ENCODE measurements at regions of chr1 and their contacts with region 1.

Region 1: GRCh38 chr1:205658943-205659581 is 21.2 kb downstream of the SLC45A3 start:
- DNase-seq: no peak
- H3K4me3 ChIP-seq: no peak overlapping the region
- CTCF ChIP-seq: peak; percentile 93

Region 2: GRCh38 chr1:205382561-205382960 is 276.5 kb before region 1 on chr1:
- CTCF ChIA-PET with region 1: no interaction called
- POLR2A ChIA-PET with region 1: no interaction called
- DNase-seq: no peak
- H3K4me3 ChIP-seq: no peak overlapping the region
- CTCF ChIP-seq: no peak

Region 3: DNA sequence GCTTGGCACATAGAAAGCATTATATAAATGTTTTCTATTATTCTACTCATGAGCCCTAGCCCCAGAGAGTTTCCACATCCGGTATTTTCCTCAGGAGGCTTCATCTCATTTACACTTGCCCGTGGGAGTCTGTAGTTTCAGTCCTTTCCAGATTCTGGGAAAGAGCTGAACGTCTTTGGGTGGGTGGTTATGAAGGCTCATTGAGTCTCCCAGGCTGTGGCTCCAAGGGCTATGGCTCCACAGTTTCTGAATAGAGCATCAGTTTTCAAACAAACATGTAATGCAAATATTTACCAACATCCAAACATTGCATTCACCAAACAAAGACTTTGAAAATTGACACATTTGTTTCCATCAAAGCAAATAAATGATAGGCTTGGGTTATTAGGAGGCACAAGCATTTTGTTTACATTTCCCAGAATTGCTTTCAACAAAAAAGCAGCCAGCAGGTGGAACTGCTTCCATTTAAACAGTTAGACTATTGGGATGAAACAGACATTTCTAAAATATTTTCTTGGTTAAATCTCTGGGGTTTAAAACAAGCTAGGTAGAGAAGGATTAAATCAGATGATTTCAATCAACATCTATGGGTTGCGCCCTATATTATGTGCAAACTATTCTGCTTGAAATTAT is 236.0 kb before region 1 on chr1:
- CTCF ChIA-PET with region 1: no interaction called
- POLR2A ChIA-PET with region 1: no interaction called
- DNase-seq: no peak
- H3K4me3 ChIP-seq: no peak overlapping the region
- CTCF ChIP-seq: no peak

Region 4: GRCh38 chr1:205449750-205450443 is 209.2 kb before region 1 on chr1:
- CTCF ChIA-PET with region 1: no interaction called
- POLR2A ChIA-PET with region 1: no interaction called
- DNase-seq: no peak
- H3K4me3 ChIP-seq: no peak overlapping the region; the same call in 1 of the 2 replicates
- CTCF ChIP-seq: no peak

Region 5: DNA sequence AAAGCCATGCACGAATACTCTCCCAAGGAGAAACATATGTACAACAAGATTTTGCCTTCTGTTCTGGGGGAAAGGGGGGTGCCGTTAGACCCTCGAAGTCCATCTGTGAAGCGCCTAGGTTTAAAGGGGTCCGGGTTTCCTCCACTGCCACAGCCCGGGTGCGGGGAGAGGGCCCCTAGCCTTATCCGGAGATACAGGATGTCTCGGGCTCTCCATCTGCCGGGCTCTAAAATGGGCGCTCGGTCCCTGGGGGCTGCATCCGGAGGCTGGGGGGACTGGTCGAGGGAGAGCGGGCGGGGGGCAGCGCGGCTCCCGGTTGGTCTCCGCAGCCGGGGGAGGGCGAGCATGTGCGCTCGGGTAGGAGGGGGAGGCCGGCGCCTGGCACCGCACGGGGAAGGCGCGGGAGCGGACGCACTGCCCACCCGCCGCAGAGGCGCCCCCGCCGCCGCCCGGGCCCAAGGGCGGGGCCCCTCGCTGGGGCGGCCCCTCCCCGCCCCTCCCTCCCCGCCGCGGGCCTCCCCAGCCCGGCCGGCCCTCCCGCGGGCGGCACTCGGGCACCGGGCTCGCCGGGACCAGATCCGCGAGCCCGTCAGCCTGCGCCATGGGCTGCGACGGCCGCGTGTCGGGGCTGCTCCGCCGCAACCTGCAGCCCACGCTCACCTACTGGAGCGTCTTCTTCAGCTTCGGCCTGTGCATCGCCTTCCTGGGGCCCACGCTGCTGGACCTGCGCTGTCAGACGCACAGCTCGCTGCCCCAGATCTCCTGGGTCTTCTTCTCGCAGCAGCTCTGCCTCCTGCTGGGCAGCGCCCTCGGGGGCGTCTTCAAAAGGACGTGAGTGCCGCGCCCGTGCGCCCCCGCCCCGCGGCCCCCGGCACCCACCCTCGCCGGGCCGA is 90.3 kb before region 1 on chr1:
- CTCF ChIA-PET with region 1: interaction called, 17 read pairs
- POLR2A ChIA-PET with region 1: no interaction called
- DNase-seq: no peak
- H3K4me3 ChIP-seq: no peak overlapping the region
- CTCF ChIP-seq: no peak

Region 6: GRCh38 chr1:205631727-205632373 is 27.2 kb before region 1 on chr1 and contains the start of gene ELK4:
- CTCF ChIA-PET with region 1: interaction called, 148 read pairs
- POLR2A ChIA-PET with region 1: no interaction called
- DNase-seq: peak; percentile 85
- H3K4me3 ChIP-seq: peak within 1 kb of the TSS; percentile 74
- CTCF ChIP-seq: peak; percentile 78

Region 7: GRCh38 chr1:205711104-205712020 is 52.3 kb after region 1 on chr1:
- CTCF ChIA-PET with region 1: interaction called, 461 read pairs
- POLR2A ChIA-PET with region 1: interaction called, 4 read pairs
- DNase-seq: peak; percentile 31
- H3K4me3 ChIP-seq: no peak overlapping the region
- CTCF ChIP-seq: peak; percentile 77

Region 8: GRCh38 chr1:205791568-205792180 is 132.6 kb after region 1 on chr1:
- CTCF ChIA-PET with region 1: interaction called, 12 read pairs
- POLR2A ChIA-PET with region 1: no interaction called
- DNase-seq: no peak
- H3K4me3 ChIP-seq: no peak overlapping the region
- CTCF ChIP-seq: peak; percentile 89

Region 9: DNA sequence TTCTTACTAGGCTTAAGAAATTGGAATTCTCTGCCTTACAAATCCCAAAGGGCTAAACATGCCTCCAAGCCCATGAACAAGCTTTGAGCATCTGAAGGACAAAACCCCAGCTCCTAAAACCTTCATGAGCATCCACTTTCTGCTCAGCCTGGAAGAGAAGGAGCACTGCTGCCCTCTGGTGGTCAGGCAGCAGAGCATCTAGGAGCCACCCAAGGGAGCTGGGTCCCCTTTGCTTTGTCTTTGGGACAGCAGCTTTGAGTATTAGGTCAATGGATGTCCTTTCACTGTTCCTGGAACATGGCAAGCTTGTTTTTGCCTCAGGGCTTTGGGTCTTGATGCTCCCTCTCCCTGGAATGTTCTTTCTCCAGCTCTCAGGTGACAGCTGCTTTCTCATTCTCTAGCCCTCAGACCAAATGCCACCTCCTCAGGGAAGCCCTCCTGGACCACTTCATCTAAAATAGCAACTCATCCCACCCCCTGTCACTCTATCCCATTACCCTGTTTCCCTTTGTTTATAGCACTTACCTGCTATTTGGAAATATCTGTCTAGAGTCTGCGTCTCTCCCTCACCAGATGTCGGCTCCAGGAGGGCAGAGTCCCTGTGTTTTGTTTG is 318.4 kb after region 1 on chr1:
- CTCF ChIA-PET with region 1: interaction called, 139 read pairs
- POLR2A ChIA-PET with region 1: no interaction called
- DNase-seq: peak; percentile 66
- H3K4me3 ChIP-seq: no peak overlapping the region
- CTCF ChIP-seq: peak; percentile 94

Region 10: DNA sequence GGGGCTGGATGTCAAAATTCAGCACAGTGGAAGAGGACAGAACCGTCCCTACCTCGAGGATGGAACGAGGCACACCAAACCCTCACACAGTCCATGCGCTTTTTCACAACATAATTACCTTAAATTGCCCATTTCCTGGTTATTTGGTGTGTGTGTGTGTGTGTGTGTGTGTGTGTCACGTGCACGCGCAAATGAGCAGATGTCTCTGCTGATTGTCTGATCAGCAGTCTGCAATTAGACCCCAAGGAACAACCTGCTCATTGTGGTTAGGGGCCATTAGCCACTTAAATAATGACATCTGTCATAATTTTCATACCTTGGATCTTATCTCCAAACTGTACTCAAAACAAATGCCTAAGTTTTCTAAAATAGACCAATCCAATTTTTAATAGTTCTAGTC is 435.0 kb after region 1 on chr1:
- CTCF ChIA-PET with region 1: no interaction called
- POLR2A ChIA-PET with region 1: no interaction called
- DNase-seq: no peak
- H3K4me3 ChIP-seq: no peak overlapping the region
- CTCF ChIP-seq: no peak

Measured in AG04449 (cell line).